ENCODE measurements at regions of chr1 and their contacts with region 1.

Region 1: GRCh38 chr1:53715478-53715877 is 23.5 kb downstream of the GLIS1 start:
- DNase-seq: peak; percentile 30
- H3K4me3 ChIP-seq: no peak overlapping the region
- H3K27ac ChIP-seq: no peak overlapping the region
- H3K4me1 ChIP-seq: no peaks in the 10 kb centered on the region
- H3K27me3 ChIP-seq: peaks cover 0 to 9% of the 10 kb centered on the region in 2 experiments
- CTCF ChIP-seq: peak; percentile 51 to 86
- POLR2A ChIP-seq: no peak

Region 2: GRCh38 chr1:53826367-53826766 is 110.9 kb after region 1 on chr1:
- CTCF ChIA-PET with region 1: interaction called, 12 read pairs
- POLR2A ChIA-PET with region 1: no interaction called
- dilution Hi-C with region 1: no loop called
- intact Hi-C with region 1: no loop called
- DNase-seq: no peak
- H3K4me3 ChIP-seq: no peak overlapping the region
- H3K27ac ChIP-seq: no peak overlapping the region
- H3K4me1 ChIP-seq: no peaks in the 10 kb centered on the region
- H3K27me3 ChIP-seq: no peaks in the 10 kb centered on the region
- CTCF ChIP-seq: peak in 1 of 2 donors; percentile 16
- POLR2A ChIP-seq: no peak

Region 3: DNA sequence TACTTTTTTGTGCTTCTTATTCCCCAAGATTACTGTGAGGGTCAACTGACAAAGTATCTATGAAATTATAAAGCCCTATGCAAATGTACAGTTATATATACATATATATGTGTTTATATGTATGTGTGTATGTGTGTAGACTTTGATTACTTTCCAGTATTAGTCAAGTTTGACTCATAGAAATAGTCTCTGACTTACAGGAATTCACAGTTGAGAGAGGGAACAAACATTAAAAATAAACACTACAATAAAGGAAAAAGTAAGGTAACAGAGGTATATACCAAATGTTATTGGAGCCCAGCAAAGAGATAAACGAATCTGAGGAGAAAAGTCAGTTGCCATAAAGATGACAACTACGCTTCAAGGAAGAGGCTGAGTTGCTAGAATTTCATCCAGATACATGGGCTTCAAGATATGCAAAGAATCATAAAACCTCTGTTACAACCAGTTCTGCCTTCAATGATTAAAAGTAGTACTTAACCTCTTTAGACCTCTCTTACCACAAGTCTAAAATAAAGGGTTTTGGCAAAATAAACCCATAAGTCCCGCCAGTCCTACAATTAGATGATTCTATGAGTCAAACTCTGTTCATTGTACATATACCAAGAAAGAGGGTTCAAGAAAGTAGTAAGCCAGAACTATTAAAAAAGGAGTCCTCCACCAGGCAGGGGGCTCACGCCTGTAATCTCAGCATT is 222.8 kb after region 1 on chr1:
- CTCF ChIA-PET with region 1: no interaction called
- POLR2A ChIA-PET with region 1: no interaction called
- dilution Hi-C with region 1: no loop called
- intact Hi-C with region 1: no loop called
- DNase-seq: no peak
- H3K4me3 ChIP-seq: no peak overlapping the region
- H3K27ac ChIP-seq: no peak overlapping the region
- H3K4me1 ChIP-seq: no peaks in the 10 kb centered on the region
- H3K27me3 ChIP-seq: no peaks in the 10 kb centered on the region
- CTCF ChIP-seq: no peak
- POLR2A ChIP-seq: no peak

Measured in endothelial cell of umbilical vein (primary cell).